SK-N-SH (cell line): ENCODE measurements at regions of chr3 and their contacts with region 1.

Region 1: GRCh38 chr3:46078712-46079400 is 51.6 kb upstream of the XCR1 start:
- DNase-seq: peak; percentile 64
- H3K4me3 ChIP-seq: peak overlapping the region in 1 of 2 experiments; percentile 24; a peak in 1 of 4 replicates
- H3K27ac ChIP-seq: no peak overlapping the region
- H3K4me1 ChIP-seq: no peaks in the 10 kb centered on the region
- H3K27me3 ChIP-seq: 0 out of 2 replicates have a peak, but pooled peaks cover 5% of the 10 kb centered on the region
- CTCF ChIP-seq: peak; percentile 100
- EP300 ChIP-seq: no peak
- RAD21 ChIP-seq: peak; percentile 98

Region 2: DNA sequence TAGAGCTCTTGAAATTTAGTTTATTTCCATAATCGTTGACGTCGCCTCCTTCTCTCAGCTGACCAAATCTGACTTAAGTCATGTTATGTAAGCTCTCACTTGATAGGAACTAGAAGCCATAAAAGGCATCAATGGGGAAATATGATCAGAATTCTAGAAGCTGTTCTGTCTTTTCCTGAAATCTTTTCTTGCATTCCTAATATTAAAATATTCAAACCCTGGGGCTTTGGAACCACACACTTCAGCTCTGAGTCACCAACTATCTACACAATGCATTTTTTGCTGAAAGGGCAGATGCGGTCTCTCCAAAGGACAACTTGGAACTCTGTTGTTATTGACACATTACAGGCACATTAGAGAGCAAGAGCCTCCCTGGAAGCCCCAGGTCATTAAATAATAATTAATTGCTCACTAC is 599.2 kb before region 1 on chr3:
- CTCF ChIA-PET with region 1: no interaction called
- POLR2A ChIA-PET with region 1: no interaction called
- DNase-seq: no peak
- H3K4me3 ChIP-seq: no peak overlapping the region
- H3K27ac ChIP-seq: peak overlapping the region; percentile 15 to 28; a peak in 2 of 4 replicates
- H3K4me1 ChIP-seq: peaks cover 0 to 6% of the 10 kb centered on the region in 2 experiments; a peak in 2 of 4 replicates
- H3K27me3 ChIP-seq: no peaks in the 10 kb centered on the region
- CTCF ChIP-seq: no peak
- EP300 ChIP-seq: no peak
- RAD21 ChIP-seq: no peak

Region 3: GRCh38 chr3:45760878-45761711 is 317.8 kb before region 1 on chr3:
- CTCF ChIA-PET with region 1: interaction called, 37 read pairs
- POLR2A ChIA-PET with region 1: no interaction called
- DNase-seq: peak; percentile 87
- H3K4me3 ChIP-seq: no peak overlapping the region; a peak in 1 of 4 replicates
- H3K27ac ChIP-seq: no peak overlapping the region
- H3K4me1 ChIP-seq: no peaks in the 10 kb centered on the region; a peak in 1 of 4 replicates
- H3K27me3 ChIP-seq: no peaks in the 10 kb centered on the region; the same call in 1 of the 2 replicates
- CTCF ChIP-seq: peak; percentile 77
- EP300 ChIP-seq: no peak
- RAD21 ChIP-seq: peak; percentile 94

Region 4: DNA sequence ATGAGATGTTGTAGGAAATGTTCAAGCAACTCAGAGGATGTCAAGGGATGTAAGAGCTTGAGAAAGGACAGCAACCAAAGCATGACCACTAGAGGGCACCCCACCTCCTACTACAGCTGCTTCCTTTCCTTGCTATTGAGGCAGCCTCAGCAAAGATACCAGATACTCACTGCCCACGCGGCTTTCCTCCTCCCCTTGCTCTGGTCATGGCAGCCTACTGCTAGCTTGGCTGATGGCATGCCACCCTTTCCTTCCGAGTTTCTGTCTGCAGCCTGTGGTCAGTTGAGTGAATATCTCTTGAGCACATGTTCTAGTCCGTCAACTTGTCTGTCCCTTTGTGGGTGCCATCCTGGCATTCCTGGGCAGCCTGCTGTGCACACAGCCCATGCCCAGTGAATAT is 140.0 kb before region 1 on chr3:
- CTCF ChIA-PET with region 1: interaction called, 280 read pairs
- POLR2A ChIA-PET with region 1: no interaction called
- DNase-seq: peak; percentile 73
- H3K4me3 ChIP-seq: no peak overlapping the region; a peak in 1 of 4 replicates
- H3K27ac ChIP-seq: no peak overlapping the region
- H3K4me1 ChIP-seq: peaks cover 0 to 18% of the 10 kb centered on the region in 2 experiments; a peak in 1 of 4 replicates
- H3K27me3 ChIP-seq: no peaks in the 10 kb centered on the region
- CTCF ChIP-seq: peak; percentile 92
- EP300 ChIP-seq: no peak
- RAD21 ChIP-seq: peak; percentile 89

Region 5: DNA sequence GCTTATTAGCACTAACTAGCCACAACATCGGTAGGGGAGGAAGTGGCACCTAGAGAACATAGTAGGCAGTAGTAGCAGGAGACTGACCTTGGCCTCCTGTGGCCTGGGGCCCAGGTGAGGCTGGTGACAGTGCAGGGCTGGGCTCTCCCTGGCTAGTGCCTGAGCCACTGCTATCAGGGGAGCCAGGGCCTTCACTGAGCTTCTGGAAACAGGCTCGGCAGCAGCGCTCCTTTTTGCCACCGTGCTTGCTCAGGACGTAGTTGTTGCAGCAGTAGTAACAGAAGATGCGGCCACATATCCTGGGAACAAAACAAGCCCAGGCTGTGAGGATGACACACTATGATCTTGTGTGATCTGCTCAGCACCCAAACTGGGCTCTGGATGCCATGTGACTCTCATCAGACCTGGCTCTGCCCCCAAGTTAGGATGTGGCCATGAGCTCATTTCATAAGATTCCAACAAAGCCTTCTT is 120.5 kb before region 1 on chr3:
- CTCF ChIA-PET with region 1: interaction called, 60 read pairs
- POLR2A ChIA-PET with region 1: no interaction called
- DNase-seq: no peak
- H3K4me3 ChIP-seq: no peak overlapping the region
- H3K27ac ChIP-seq: no peak overlapping the region
- H3K4me1 ChIP-seq: no peaks in the 10 kb centered on the region
- H3K27me3 ChIP-seq: no peaks in the 10 kb centered on the region
- CTCF ChIP-seq: no peak
- EP300 ChIP-seq: no peak
- RAD21 ChIP-seq: no peak

Region 6: GRCh38 chr3:46024131-46024530 is 54.7 kb before region 1 on chr3:
- CTCF ChIA-PET with region 1: interaction called, 10 read pairs
- POLR2A ChIA-PET with region 1: no interaction called
- DNase-seq: no peak
- H3K4me3 ChIP-seq: no peak overlapping the region
- H3K27ac ChIP-seq: no peak overlapping the region
- H3K4me1 ChIP-seq: no peaks in the 10 kb centered on the region
- H3K27me3 ChIP-seq: no peaks in the 10 kb centered on the region; the same call in 1 of the 2 replicates
- CTCF ChIP-seq: no peak
- EP300 ChIP-seq: no peak
- RAD21 ChIP-seq: no peak

Region 7: DNA sequence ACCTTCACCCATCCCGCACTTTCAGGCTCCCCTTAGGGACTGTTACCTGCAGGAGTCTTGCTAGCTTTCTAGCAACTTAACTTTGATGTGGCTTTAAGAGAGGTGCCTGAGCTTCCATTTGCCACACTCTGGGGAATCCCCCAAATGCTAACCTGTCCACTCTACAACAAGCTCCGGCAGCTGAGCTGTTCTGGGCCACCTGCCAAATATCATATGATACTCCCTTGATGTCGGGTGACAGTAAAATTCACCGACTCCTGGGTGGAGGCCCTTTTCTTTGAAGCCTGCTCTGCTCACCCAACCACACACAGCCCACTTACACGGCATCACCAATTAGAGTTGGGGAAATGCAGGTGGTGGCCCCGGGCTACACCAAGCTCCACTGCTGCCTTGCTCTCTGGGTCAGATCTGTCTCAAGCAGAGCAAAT is 13.5 kb before region 1 on chr3:
- CTCF ChIA-PET with region 1: interaction called, 106 read pairs
- POLR2A ChIA-PET with region 1: no interaction called
- DNase-seq: peak; percentile 17
- H3K4me3 ChIP-seq: no peak overlapping the region
- H3K27ac ChIP-seq: no peak overlapping the region
- H3K4me1 ChIP-seq: peaks cover 0 to 7% of the 10 kb centered on the region in 2 experiments; a peak in 1 of 4 replicates
- H3K27me3 ChIP-seq: peaks cover 37% of the 10 kb centered on the region; the same call in 1 of the 2 replicates
- CTCF ChIP-seq: no peak
- EP300 ChIP-seq: no peak
- RAD21 ChIP-seq: no peak

Region 8: DNA sequence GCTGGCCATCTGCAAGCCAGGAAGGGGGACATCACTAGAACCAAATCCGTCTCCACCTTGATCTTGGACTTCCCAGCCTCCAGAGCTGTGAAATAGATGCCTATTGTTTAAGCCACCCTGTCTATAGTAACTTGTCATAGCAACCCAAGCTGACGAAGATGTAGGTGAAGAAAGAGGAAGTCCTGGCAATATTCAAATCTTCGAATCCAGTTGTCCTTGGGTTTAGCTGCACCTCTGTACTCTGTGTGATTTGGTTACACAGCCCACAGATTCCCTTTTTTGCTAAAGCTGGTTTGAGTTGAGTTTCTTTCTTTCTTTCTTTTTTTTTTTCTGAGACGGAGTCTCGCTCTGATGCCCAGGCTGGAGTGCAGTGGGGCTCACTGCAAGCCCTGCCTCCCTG is 16.5 kb after region 1 on chr3:
- CTCF ChIA-PET with region 1: interaction called, 67 read pairs
- POLR2A ChIA-PET with region 1: no interaction called
- DNase-seq: no peak
- H3K4me3 ChIP-seq: no peak overlapping the region
- H3K27ac ChIP-seq: no peak overlapping the region
- H3K4me1 ChIP-seq: no peaks in the 10 kb centered on the region
- H3K27me3 ChIP-seq: peaks cover 11% of the 10 kb centered on the region; the same call in 1 of the 2 replicates
- CTCF ChIP-seq: no peak
- EP300 ChIP-seq: no peak
- RAD21 ChIP-seq: no peak